Caco-2 (cell line): ENCODE measurements at regions of chr7 and their contacts with region 1.

Region 1: DNA sequence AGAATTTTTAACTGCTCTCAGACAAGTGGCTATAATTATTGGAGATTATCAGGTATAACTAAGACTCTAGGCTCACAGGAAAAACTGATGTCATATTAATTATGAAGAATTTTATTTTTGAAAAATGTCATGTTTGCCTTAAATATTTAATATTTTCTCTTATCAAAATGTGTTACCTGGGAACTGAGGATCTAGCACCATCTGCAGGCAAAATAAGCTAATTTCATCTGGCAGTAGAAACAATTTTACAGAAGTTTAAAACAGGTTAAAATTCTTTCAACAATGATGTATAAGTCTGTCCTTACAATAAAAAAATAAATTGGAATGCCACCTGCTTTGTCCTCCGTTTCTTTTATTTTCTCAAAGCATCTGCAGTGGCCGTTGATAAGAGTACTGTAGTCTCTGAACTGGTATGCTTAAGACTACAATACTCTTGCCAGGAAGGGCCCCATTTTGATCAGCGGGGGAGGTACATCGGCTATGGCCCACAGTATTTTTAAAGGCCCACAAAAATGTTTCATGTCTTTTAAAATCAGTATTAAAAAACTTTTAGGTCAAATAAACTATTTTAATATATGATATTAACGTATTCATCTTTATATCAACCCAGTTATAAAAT is 81.3 kb downstream of the VWDE start:
- DNase-seq: peak in 1 of 2 experiments; percentile 10
- H3K4me3 ChIP-seq: no peak overlapping the region
- H3K4me3 Mint-ChIP-seq: no peak overlapping the region
- H3K27ac Mint-ChIP-seq: no peak overlapping the region
- H3K4me1 ChIP-seq: no peaks in the 10 kb centered on the region
- H3K4me1 Mint-ChIP-seq: no peaks in the 10 kb centered on the region
- H3K27me3 ChIP-seq: no peaks in the 10 kb centered on the region
- H3K27me3 Mint-ChIP-seq: no peaks in the 10 kb centered on the region
- CTCF ChIP-seq: peak; percentile 72 to 82

Region 2: DNA sequence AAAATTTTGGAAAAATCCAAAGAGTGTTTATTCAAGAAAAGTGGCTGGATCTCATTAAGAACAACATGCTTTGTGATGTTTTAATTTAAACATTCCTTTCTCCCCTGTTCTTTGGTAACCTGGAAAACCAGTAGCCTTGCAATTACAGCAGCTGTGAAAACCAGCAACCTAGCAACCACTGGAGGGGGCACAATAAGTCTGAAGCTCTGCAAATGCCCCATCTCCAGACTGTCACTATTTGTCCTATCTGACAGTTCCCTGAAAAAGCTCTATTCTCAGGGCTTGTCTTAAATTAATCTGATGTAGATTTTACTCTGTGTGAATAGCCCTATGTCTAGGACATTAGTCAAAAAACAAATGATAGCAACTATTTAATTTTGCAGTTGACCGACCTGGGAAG is 352.8 kb before region 1 on chr7:
- CTCF ChIA-PET with region 1: interaction called, 3 read pairs
- POLR2A ChIA-PET with region 1: no interaction called
- intact Hi-C with region 1: loop called (anchors 1 kb)
- DNase-seq: peak in 1 of 2 experiments; percentile 15
- H3K4me3 ChIP-seq: no peak overlapping the region
- H3K4me3 Mint-ChIP-seq: no peak overlapping the region
- H3K27ac Mint-ChIP-seq: no peak overlapping the region
- H3K4me1 ChIP-seq: no peaks in the 10 kb centered on the region
- H3K4me1 Mint-ChIP-seq: no peaks in the 10 kb centered on the region
- H3K27me3 ChIP-seq: no peaks in the 10 kb centered on the region
- H3K27me3 Mint-ChIP-seq: no peaks in the 10 kb centered on the region
- CTCF ChIP-seq: no peak

Region 3: DNA sequence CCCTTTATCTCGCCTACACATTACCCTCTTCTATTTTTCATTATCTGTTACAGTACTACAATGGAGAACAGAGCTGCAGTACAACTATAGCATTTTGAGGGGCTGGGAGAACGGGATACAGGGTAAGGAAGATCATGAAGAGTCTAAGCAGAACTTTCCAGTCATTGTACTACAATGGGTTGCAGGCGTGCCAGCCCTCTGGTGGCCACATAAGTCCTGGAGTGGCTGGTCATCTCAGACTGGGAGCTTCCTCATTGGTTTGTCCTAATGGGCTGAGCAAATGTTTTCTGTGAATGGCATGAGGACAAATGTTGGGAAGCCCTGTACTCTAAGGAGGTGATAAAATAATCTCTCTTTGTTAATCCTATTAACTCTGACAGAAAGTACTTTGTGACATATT is 78.3 kb before region 1 on chr7:
- CTCF ChIA-PET with region 1: interaction called, 3 read pairs
- POLR2A ChIA-PET with region 1: no interaction called
- intact Hi-C with region 1: loop called (anchors 2 kb)
- DNase-seq: peak; percentile 69 to 71
- H3K4me3 ChIP-seq: no peak overlapping the region
- H3K4me3 Mint-ChIP-seq: no peak overlapping the region
- H3K27ac Mint-ChIP-seq: no peak overlapping the region
- H3K4me1 ChIP-seq: no peaks in the 10 kb centered on the region
- H3K4me1 Mint-ChIP-seq: no peaks in the 10 kb centered on the region
- H3K27me3 ChIP-seq: no peaks in the 10 kb centered on the region
- H3K27me3 Mint-ChIP-seq: no peaks in the 10 kb centered on the region
- CTCF ChIP-seq: peak; percentile 59 to 78

Region 4: DNA sequence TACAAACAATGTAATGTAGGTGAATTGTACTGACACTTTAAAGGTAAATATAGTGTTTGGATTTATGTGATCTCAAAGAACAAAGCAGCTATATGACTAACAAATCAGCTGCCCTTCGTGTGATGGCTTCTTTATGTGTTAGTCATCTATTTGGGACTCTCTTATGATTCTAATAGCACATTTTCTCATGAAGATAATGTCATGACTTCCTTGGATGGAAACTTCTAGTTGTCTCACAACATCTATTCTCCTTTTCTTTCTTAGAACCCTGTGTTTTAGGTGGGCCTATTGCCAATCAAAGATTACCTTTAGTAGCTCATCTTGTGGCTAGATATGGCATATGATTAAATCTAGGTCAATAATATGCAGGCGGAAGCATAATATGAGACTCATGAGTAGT is 66.3 kb before region 1 on chr7:
- CTCF ChIA-PET with region 1: no interaction called
- POLR2A ChIA-PET with region 1: no interaction called
- intact Hi-C with region 1: no loop called
- DNase-seq: no peak
- H3K4me3 ChIP-seq: no peak overlapping the region
- H3K4me3 Mint-ChIP-seq: no peak overlapping the region
- H3K27ac Mint-ChIP-seq: no peak overlapping the region
- H3K4me1 ChIP-seq: no peaks in the 10 kb centered on the region
- H3K4me1 Mint-ChIP-seq: no peaks in the 10 kb centered on the region
- H3K27me3 ChIP-seq: no peaks in the 10 kb centered on the region
- H3K27me3 Mint-ChIP-seq: peaks cover 11% of the 10 kb centered on the region
- CTCF ChIP-seq: no peak